ENCODE measurements at regions of chr4 and their contacts with region 1.

Region 1: GRCh38 chr4:7192252-7193029 is at the start of gene SORCS2:
- DNase-seq: no peak
- ATAC-seq: peak; percentile 91
- H3K4me3 ChIP-seq: no peak within 1 kb of the TSS
- H3K27ac ChIP-seq: no peak within 1 kb of the TSS
- H3K4me1 ChIP-seq: no peaks in the 10 kb centered on the region
- H3K27me3 ChIP-seq: peaks cover 2 to 4% of the 10 kb centered on the region in 2 experiments; a peak in 3 of 4 replicates
- CTCF ChIP-seq: peak; percentile 24 to 59 (median 48); a peak in 3 of 6 replicates
- EP300 ChIP-seq: no peak
- POLR2A ChIP-seq: no peak
- RAD21 ChIP-seq: peak; percentile 49
- polyA plus RNA-seq, gene SORCS2: not detected

Region 2: DNA sequence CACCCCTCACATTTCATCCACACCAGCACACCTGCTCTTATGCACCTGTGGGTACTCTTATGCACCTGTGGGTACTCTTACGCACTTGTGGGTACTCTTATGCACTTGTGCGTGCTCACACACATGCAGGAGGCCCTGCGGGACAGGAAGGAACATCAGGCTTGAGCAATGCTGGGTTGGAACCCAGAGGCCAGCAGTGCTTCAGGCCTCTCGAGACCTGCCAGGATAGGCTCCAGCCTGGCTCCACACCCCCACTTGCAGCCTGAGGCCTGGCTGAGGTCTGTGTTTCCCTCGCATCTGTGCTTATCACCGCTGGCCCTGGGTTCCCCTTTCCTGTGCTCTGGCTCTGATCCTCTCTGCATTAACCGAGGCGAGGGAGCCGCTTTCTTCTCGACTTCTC is 34.6 kb after region 1 on chr4:
- CTCF ChIA-PET with region 1: no interaction called
- POLR2A ChIA-PET with region 1: no interaction called
- RAD21 ChIA-PET with region 1: no interaction called
- SMC1A ChIA-PET with region 1: no interaction called
- in situ Hi-C with region 1: no loop called
- intact Hi-C with region 1: no loop called
- DNase-seq: no peak
- ATAC-seq: no peak
- H3K4me3 ChIP-seq: no peak overlapping the region
- H3K27ac ChIP-seq: no peak overlapping the region
- H3K4me1 ChIP-seq: no peaks in the 10 kb centered on the region
- H3K27me3 ChIP-seq: no peaks in the 10 kb centered on the region; a peak in 3 of 4 replicates
- CTCF ChIP-seq: no peak
- EP300 ChIP-seq: no peak
- POLR2A ChIP-seq: no peak
- RAD21 ChIP-seq: no peak

Region 3: DNA sequence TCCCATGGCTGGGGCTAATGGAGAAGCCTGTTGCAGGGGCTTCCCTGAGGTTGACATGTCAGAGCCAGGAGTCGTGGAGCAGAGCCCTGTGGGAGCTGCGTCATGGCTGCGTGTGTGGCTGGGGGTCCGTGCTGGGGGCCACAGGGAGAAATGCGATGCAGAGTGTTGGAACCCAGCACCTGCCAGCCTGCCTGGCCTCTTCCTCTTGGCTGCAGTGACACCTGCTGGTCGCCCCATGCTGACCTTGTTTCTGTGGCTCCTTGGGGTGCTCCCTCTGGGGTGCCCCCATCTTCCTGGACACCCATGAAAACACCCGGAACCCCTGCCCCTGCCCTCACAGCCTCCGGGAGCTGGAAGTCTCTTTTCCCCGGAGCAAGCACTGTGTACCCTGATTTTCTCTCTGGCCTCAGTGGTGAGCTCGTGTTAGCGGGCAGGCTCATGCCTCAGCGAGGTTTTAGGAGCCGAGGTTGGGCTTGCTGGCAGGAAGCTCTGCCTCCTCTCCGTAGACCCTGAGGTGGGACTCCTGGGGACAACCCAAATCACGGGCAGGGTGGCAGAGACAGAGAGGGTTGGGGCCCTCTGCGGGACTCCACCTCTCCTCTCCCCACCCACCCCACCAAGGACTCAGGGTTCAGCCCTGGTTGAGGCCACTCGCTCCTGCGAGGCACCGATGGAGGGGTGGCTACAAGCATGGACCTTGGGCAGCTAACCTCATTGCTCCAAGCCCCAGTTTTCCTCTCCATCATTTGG is 103.6 kb after region 1 on chr4:
- CTCF ChIA-PET with region 1: interaction called, 4 read pairs
- POLR2A ChIA-PET with region 1: no interaction called
- RAD21 ChIA-PET with region 1: no interaction called
- SMC1A ChIA-PET with region 1: no interaction called
- in situ Hi-C with region 1: no loop called
- intact Hi-C with region 1: loop called (anchors 2 kb)
- DNase-seq: no peak
- ATAC-seq: peak; percentile 68
- H3K4me3 ChIP-seq: no peak overlapping the region
- H3K27ac ChIP-seq: no peak overlapping the region
- H3K4me1 ChIP-seq: no peaks in the 10 kb centered on the region
- H3K27me3 ChIP-seq: no peaks in the 10 kb centered on the region; a peak in 2 of 4 replicates
- CTCF ChIP-seq: peak; percentile 33 to 56 (median 55); a peak in 5 of 6 replicates
- EP300 ChIP-seq: no peak
- POLR2A ChIP-seq: no peak
- RAD21 ChIP-seq: peak; percentile 56

Region 4: GRCh38 chr4:7335344-7336069 is 143.1 kb after region 1 on chr4:
- CTCF ChIA-PET with region 1: interaction called, 10 read pairs
- POLR2A ChIA-PET with region 1: no interaction called
- RAD21 ChIA-PET with region 1: interaction called, 5 read pairs
- SMC1A ChIA-PET with region 1: no interaction called
- in situ Hi-C with region 1: no loop called
- intact Hi-C with region 1: loop called (anchors 5 kb)
- DNase-seq: peak; percentile 1
- ATAC-seq: peak; percentile 94
- H3K4me3 ChIP-seq: no peak overlapping the region
- H3K27ac ChIP-seq: no peak overlapping the region
- H3K4me1 ChIP-seq: no peaks in the 10 kb centered on the region
- H3K27me3 ChIP-seq: no peaks in the 10 kb centered on the region; a peak in 2 of 4 replicates
- CTCF ChIP-seq: peak; percentile 62 to 78 (median 65)
- EP300 ChIP-seq: no peak
- POLR2A ChIP-seq: no peak
- RAD21 ChIP-seq: peak; percentile 34

Region 5: DNA sequence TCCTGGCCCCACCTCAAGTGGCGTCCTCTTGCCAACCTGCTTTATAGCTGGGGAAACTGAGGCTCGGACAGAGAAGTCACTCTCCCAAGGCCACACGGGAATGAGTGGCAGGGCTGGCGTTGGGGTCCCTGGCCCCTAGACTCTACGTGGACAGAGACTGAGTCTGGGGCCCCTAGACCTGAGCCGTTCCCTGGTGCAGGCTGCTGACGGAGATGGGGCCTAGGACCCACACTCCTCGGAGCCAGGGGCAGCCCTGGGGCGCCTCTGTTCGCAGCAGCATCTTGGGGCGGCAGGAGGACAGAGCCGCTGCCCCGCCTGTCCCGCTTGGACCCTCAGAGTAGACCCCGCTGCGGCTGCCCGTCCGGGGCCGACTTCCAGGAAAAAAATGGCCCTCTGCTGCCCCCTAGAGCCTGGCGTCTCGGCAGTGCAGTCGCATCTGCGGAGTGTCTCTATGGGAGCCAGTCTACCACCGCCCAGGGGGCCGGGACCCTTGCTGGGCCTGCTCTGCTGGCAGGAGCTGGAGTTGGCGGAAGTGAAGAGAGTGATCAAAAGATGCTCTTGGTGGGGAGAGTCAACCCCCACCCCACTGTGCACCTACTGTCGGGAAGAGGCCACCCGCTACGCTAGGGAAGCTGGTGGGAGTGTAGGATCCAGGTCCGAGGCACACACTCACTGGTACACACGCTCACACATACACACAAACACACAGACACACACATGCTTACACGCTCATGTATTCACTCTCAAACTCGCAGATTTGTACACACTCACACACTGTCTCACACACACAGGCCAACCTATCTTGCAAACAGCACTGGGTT is 527.1 kb after region 1 on chr4:
- CTCF ChIA-PET with region 1: no interaction called
- POLR2A ChIA-PET with region 1: no interaction called
- RAD21 ChIA-PET with region 1: interaction called, 3 read pairs
- SMC1A ChIA-PET with region 1: no interaction called
- in situ Hi-C with region 1: loop called (anchors 10 kb)
- intact Hi-C with region 1: loop called (anchors 10 kb)
- DNase-seq: no peak
- ATAC-seq: peak; percentile 86
- H3K4me3 ChIP-seq: no peak overlapping the region
- H3K27ac ChIP-seq: no peak overlapping the region
- H3K4me1 ChIP-seq: no peaks in the 10 kb centered on the region
- H3K27me3 ChIP-seq: peaks cover 0 to 4% of the 10 kb centered on the region in 2 experiments; a peak in 2 of 4 replicates
- CTCF ChIP-seq: peak; percentile 58 to 74 (median 64)
- EP300 ChIP-seq: no peak
- POLR2A ChIP-seq: no peak
- RAD21 ChIP-seq: peak; percentile 50